ENCODE measurements at regions of chr4 and their contacts with region 1.

Region 1: DNA sequence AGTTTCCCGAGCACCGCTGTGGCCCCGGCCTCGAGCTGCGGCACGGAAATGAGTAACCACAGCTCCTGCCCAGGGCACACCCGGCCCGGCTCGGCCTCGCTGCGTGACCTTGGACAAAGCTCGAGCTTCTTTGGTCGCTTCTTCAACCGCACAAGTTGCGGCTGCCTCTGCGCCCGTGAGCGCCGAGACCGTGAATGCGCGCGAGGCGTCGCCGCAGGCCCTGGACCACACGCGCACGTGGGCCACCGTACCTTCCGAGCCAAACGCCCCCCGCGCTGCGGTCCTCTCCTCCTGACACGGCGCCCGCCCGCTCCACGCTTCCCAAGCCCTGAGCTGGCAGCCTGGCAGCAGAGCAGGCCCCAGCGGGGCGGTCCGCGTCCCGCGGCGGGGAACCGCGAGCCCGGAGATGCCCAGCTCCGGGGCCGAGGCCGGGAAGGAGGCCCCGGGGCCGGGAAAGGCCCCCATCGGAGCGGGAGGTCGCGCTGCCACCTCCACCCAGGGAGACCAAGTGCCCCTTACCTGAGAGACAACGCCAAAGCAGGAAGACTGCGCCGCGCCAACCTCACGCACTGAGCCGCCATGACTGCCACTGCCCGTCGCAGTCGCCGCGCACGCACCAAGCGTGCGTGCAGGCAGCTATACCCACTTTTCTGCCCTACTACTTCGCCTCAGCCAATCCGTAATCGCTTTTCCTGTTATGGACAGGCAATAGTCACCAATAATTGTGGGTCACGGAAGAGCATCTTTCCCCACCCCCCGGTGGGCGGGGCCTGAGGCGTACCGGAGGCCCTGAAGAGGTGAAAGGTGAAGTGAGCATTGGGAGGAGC is at the start of gene GRPEL1:
- DNase-seq: peak; percentile 100
- ATAC-seq: peak; percentile 91
- H3K4me3 Mint-ChIP-seq: peak within 1 kb of the TSS; percentile 93
- H3K27ac Mint-ChIP-seq: peak within 1 kb of the TSS; percentile 84; the same call in 1 of the 2 replicates
- H3K4me1 Mint-ChIP-seq: peaks cover 29% of the 10 kb centered on the region
- H3K27me3 Mint-ChIP-seq: peaks cover 33% of the 10 kb centered on the region
- CTCF ChIP-seq: no peak
- total RNA-seq, gene GRPEL1: 45.9 to 50.1 TPM (median 50.0 TPM) in 3 replicates

Region 2: GRCh38 chr4:6716018-6716911 is 351.4 kb before region 1 on chr4 and contains the start of gene BLOC1S4:
- CTCF ChIA-PET with region 1: interaction called, 11 read pairs
- POLR2A ChIA-PET with region 1: no interaction called
- DNase-seq: peak; percentile 77
- ATAC-seq: peak; percentile 73
- H3K4me3 Mint-ChIP-seq: peak within 1 kb of the TSS; percentile 75
- H3K27ac Mint-ChIP-seq: peak within 1 kb of the TSS; percentile 96
- H3K4me1 Mint-ChIP-seq: peaks cover 8% of the 10 kb centered on the region
- H3K27me3 Mint-ChIP-seq: peaks cover 34% of the 10 kb centered on the region
- CTCF ChIP-seq: no peak
- total RNA-seq, gene BLOC1S4: 21.4 to 23.4 TPM (median 21.9 TPM) in 3 replicates

Region 3: GRCh38 chr4:6974138-6974848 is 93.4 kb before region 1 on chr4:
- CTCF ChIA-PET with region 1: interaction called, 13 read pairs
- POLR2A ChIA-PET with region 1: interaction called, 7 read pairs
- DNase-seq: peak; percentile 95
- ATAC-seq: peak; percentile 80
- H3K4me3 Mint-ChIP-seq: no peak overlapping the region
- H3K27ac Mint-ChIP-seq: peak overlapping the region; percentile 78
- H3K4me1 Mint-ChIP-seq: peaks cover 37% of the 10 kb centered on the region
- H3K27me3 Mint-ChIP-seq: no peaks in the 10 kb centered on the region
- CTCF ChIP-seq: peak; percentile 95

Region 4: DNA sequence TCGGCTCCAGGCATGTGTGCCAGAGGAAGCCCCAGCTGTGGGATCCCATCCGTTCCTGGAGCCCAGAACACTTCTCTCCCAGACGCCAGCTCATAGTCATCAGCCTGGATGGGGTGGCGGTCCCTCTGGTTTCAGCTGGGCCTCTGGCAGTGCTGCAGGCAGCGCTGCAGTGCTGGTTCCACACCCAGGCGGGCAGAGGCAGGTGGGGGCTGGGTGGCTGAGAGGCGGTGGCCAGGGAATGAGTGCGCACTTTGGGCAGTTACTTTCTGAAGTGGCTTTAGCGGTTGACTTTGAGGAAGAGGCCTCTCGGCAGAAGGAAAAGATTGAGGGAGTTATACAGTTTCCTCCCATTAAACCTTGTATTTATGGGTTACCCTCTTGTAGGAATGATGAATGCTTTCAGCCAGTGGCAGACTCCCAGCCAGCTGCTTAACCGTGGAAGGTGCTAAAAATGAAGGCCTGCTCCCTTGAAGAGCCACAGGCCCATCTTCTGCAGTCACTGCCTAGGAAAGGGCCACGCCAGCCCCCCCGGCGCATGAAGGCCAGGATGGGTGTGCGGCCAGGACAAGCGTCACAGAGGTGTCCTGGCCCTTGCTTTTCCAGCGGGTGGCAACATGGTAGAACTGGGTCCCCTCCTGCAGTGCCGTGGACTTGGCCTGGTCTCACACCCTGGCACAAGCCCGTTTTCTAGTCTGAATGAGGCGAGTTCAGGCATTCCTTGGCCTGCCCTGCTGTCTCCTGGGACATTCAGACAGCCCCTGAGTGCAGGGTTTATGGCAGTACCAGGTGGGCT is 14.5 kb before region 1 on chr4:
- CTCF ChIA-PET with region 1: interaction called, 10 read pairs
- POLR2A ChIA-PET with region 1: interaction called, 5 read pairs
- DNase-seq: no peak
- ATAC-seq: no peak
- H3K4me3 Mint-ChIP-seq: no peak overlapping the region
- H3K27ac Mint-ChIP-seq: no peak overlapping the region
- H3K4me1 Mint-ChIP-seq: peaks cover 4% of the 10 kb centered on the region
- H3K27me3 Mint-ChIP-seq: no peaks in the 10 kb centered on the region
- CTCF ChIP-seq: no peak

Region 5: GRCh38 chr4:7101692-7102515 is 34.2 kb after region 1 on chr4:
- CTCF ChIA-PET with region 1: interaction called, 37 read pairs
- POLR2A ChIA-PET with region 1: no interaction called
- DNase-seq: peak; percentile 82
- ATAC-seq: peak; percentile 87
- H3K4me3 Mint-ChIP-seq: peak overlapping the region; percentile 89
- H3K27ac Mint-ChIP-seq: no peak overlapping the region
- H3K4me1 Mint-ChIP-seq: peaks cover 15% of the 10 kb centered on the region
- H3K27me3 Mint-ChIP-seq: peaks cover 85% of the 10 kb centered on the region
- CTCF ChIP-seq: peak; percentile 41; the same call in 1 of the 2 replicates

Measured in WTC11 (cell line).